Activated CD4-positive, alpha-beta memory T cell treated with anti-CD3 and anti-CD28 coated beads, Interleukin-2, amount 10 ng/mL, durations not matched to agents 7 days and 5 days (primary cell): ENCODE measurements at regions of chr12 and their contacts with region 1.

Region 1: GRCh38 chr12:105235732-105236476 is at the start of gene APPL2:
- DNase-seq: peak; percentile 79
- H3K4me3 Mint-ChIP-seq: peak within 1 kb of the TSS; percentile 90
- H3K27ac Mint-ChIP-seq: peak within 1 kb of the TSS; percentile 86
- H3K4me1 Mint-ChIP-seq: peaks cover 35% of the 10 kb centered on the region
- H3K27me3 Mint-ChIP-seq: peaks cover 2% of the 10 kb centered on the region
- total RNA-seq, gene APPL2: 32.2 to 34.2 TPM

Region 2: GRCh38 chr12:105107494-105108371 is 128.2 kb before region 1 on chr12 and contains the start of gene WASHC4:
- CTCF ChIA-PET with region 1: no interaction called
- POLR2A ChIA-PET with region 1: interaction called, 14 read pairs
- DNase-seq: peak; percentile 96
- H3K4me3 Mint-ChIP-seq: peak within 1 kb of the TSS; percentile 92
- H3K27ac Mint-ChIP-seq: peak within 1 kb of the TSS; percentile 96
- H3K4me1 Mint-ChIP-seq: peaks cover 37% of the 10 kb centered on the region
- H3K27me3 Mint-ChIP-seq: peaks cover 12% of the 10 kb centered on the region
- total RNA-seq, gene WASHC4: 48.4 to 50.1 TPM

Region 3: GRCh38 chr12:105138248-105138647 is 97.7 kb before region 1 on chr12:
- CTCF ChIA-PET with region 1: no interaction called
- POLR2A ChIA-PET with region 1: no interaction called
- DNase-seq: no peak
- H3K4me3 Mint-ChIP-seq: no peak overlapping the region
- H3K27ac Mint-ChIP-seq: no peak overlapping the region
- H3K4me1 Mint-ChIP-seq: no peaks in the 10 kb centered on the region
- H3K27me3 Mint-ChIP-seq: no peaks in the 10 kb centered on the region